ENCODE measurements at regions of chr11 and their contacts with region 1.

Region 1: GRCh38 chr11:112219476-112220232 is 6.6 kb upstream of the PTS start:
- DNase-seq: peak; percentile 20
- H3K4me3 ChIP-seq: no peak overlapping the region
- H3K27ac ChIP-seq: no peak overlapping the region
- H3K4me1 ChIP-seq: peaks cover 0 to 12% (median 3%) of the 10 kb centered on the region in 4 donors
- H3K27me3 ChIP-seq: no peaks in the 10 kb centered on the region
- CTCF ChIP-seq: peak; percentile 72 to 89 (median 82)
- EP300 ChIP-seq: no peak
- POLR2A ChIP-seq: no peak

Region 2: DNA sequence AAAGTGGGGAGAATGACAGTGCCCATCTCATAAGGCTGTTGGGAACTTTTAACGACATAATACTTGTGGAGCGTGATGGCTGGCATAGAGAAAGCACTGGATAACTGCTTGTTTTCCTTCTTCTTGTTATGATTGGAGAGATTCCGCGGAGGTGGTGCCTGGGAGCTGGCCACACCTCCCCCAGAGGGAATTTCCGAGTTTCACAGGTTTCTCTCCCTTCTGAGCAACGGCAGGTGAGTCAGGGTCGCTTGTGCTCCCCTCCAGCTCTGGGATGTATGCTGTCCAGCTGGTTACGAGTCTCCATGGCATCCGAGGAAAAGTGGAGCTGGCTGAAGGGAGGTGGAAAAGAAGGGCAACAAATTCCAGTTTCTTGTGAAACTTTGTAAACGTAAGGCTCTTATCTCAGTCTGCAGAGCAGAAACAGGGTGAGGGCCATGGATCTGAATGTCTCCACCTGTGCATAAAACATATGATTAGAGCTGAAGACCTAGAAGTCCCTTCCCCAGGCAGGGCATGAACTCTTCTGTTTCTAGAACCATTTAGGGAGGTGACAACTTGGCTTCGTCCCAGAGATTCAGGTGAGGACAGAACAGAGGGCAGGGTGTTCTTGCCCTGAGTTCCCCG is 51.0 kb after region 1 on chr11:
- in situ Hi-C with region 1: loop called in 2 of 4 experiments (anchors 5 kb)
- intact Hi-C with region 1: no loop called
- DNase-seq: no peak
- H3K4me3 ChIP-seq: peak overlapping the region in 1 of 4 donors; percentile 12
- H3K27ac ChIP-seq: no peak overlapping the region
- H3K4me1 ChIP-seq: peaks cover 0 to 3% (median 2%) of the 10 kb centered on the region in 4 donors
- H3K27me3 ChIP-seq: no peaks in the 10 kb centered on the region
- CTCF ChIP-seq: no peak
- EP300 ChIP-seq: no peak
- POLR2A ChIP-seq: no peak

Region 3: GRCh38 chr11:112555491-112556364 is 336.1 kb after region 1 on chr11:
- in situ Hi-C with region 1: loop called in 3 of 4 experiments (anchors 25 kb)
- intact Hi-C with region 1: no loop called
- DNase-seq: peak; percentile 67
- H3K4me3 ChIP-seq: no peak overlapping the region
- H3K27ac ChIP-seq: no peak overlapping the region
- H3K4me1 ChIP-seq: no peaks in the 10 kb centered on the region
- H3K27me3 ChIP-seq: no peaks in the 10 kb centered on the region
- CTCF ChIP-seq: peak; percentile 41 to 68 (median 64)
- EP300 ChIP-seq: no peak
- POLR2A ChIP-seq: no peak